ENCODE measurements at regions of chr3 and their contacts with region 1.

Region 1: GRCh38 chr3:67654099-67654843 is at the start of gene SUCLG2:
- DNase-seq: peak; percentile 71
- ATAC-seq: peak; percentile 94
- H3K4me3 ChIP-seq: peak within 1 kb of the TSS; percentile 64 to 94 (median 93)
- H3K27ac ChIP-seq: peak within 1 kb of the TSS; percentile 94
- H3K4me1 ChIP-seq: peaks cover 46% of the 10 kb centered on the region
- H3K27me3 ChIP-seq: no peaks in the 10 kb centered on the region
- CTCF ChIP-seq: no peak
- EP300 ChIP-seq: peak in 1 of 2 experiments; percentile 26; a peak in 1 of 4 replicates
- POLR2A ChIP-seq: peak; percentile 78 to 82
- RAD21 ChIP-seq: peak; percentile 66; the same call in 1 of the 2 replicates
- total RNA-seq, gene SUCLG2: 64.9 and 79.4 TPM in 2 replicates

Region 2: DNA sequence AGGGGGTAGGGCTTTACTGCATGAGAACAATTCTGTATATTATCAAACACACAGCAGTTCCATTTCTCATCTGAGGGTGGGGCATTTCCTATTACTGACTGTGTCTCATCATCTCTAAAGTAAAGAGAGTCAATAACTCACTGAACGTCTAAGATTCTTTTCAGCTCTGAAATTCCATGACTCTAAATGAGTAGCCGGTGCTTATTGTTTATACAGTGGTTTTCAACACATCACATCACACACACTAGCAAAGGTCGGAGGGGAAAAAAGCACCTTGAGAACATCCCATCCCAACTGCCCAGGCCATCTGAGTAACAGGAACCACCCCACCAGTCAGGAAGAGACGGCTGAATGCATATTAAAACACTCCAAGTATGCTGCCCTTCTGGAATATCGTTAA is 195.9 kb before region 1 on chr3:
- CTCF ChIA-PET with region 1: no interaction called
- POLR2A ChIA-PET with region 1: no interaction called
- in situ Hi-C with region 1: no loop called
- intact Hi-C with region 1: no loop called
- DNase-seq: no peak
- ATAC-seq: no peak
- H3K4me3 ChIP-seq: no peak overlapping the region
- H3K27ac ChIP-seq: no peak overlapping the region
- H3K4me1 ChIP-seq: no peaks in the 10 kb centered on the region
- H3K27me3 ChIP-seq: no peaks in the 10 kb centered on the region
- CTCF ChIP-seq: no peak
- EP300 ChIP-seq: no peak
- POLR2A ChIP-seq: no peak
- RAD21 ChIP-seq: no peak

Region 3: GRCh38 chr3:67540198-67540894 is 113.9 kb before region 1 on chr3:
- CTCF ChIA-PET with region 1: no interaction called
- POLR2A ChIA-PET with region 1: interaction called, 3 read pairs
- in situ Hi-C with region 1: no loop called
- intact Hi-C with region 1: loop called (anchors 1 kb)
- DNase-seq: peak; percentile 81
- ATAC-seq: peak; percentile 98
- H3K4me3 ChIP-seq: peak overlapping the region in 1 of 3 experiments; percentile 40; a peak in 2 of 6 replicates
- H3K27ac ChIP-seq: peak overlapping the region; percentile 60
- H3K4me1 ChIP-seq: peaks cover 28% of the 10 kb centered on the region
- H3K27me3 ChIP-seq: no peaks in the 10 kb centered on the region
- CTCF ChIP-seq: peak; percentile 68
- EP300 ChIP-seq: 0 out of 4 replicates have a peak, but pooled peaks of 1 of the 2 experiments have one; percentile 25
- POLR2A ChIP-seq: no peak
- RAD21 ChIP-seq: 0 out of 2 replicates have a peak, but pooled peaks have one; percentile 18

Region 4: DNA sequence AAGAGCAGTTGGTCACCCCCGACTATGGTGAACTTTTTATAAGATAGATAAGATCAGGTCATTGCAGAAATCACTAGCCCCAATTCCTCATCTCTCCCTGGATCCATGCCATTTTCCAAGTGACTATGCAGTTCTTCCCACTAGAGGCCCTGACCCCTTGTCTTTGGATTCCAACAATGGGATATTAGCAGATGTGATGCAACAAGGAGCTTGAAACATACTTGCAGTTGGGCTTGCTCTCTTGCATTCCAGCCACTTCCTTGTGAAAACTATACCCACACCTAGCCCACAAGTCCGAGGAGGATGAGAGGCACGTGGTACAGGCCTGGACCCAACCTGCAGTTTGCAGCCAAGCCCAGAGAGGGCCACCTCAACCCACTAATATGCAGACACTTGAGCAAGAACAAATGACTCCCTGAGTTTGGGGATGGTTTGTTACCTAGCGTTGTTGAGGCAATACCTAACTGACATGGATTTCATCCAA is 60.5 kb before region 1 on chr3:
- CTCF ChIA-PET with region 1: no interaction called
- POLR2A ChIA-PET with region 1: interaction called, 5 read pairs
- in situ Hi-C with region 1: no loop called
- intact Hi-C with region 1: loop called (anchors 5 kb)
- DNase-seq: peak; percentile 14
- ATAC-seq: peak; percentile 88
- H3K4me3 ChIP-seq: no peak overlapping the region
- H3K27ac ChIP-seq: no peak overlapping the region
- H3K4me1 ChIP-seq: peaks cover 29% of the 10 kb centered on the region
- H3K27me3 ChIP-seq: no peaks in the 10 kb centered on the region
- CTCF ChIP-seq: peak; percentile 38
- EP300 ChIP-seq: no peak
- POLR2A ChIP-seq: no peak
- RAD21 ChIP-seq: peak; percentile 41

Region 5: GRCh38 chr3:68017067-68017466 is 362.8 kb after region 1 on chr3:
- CTCF ChIA-PET with region 1: no interaction called
- POLR2A ChIA-PET with region 1: no interaction called
- in situ Hi-C with region 1: no loop called
- intact Hi-C with region 1: no loop called
- DNase-seq: peak; percentile 8
- ATAC-seq: no peak
- H3K4me3 ChIP-seq: no peak overlapping the region
- H3K27ac ChIP-seq: no peak overlapping the region
- H3K4me1 ChIP-seq: no peaks in the 10 kb centered on the region
- H3K27me3 ChIP-seq: no peaks in the 10 kb centered on the region
- CTCF ChIP-seq: 0 out of 2 replicates have a peak, but pooled peaks have one; percentile 11
- EP300 ChIP-seq: no peak
- POLR2A ChIP-seq: no peak
- RAD21 ChIP-seq: no peak

Measured in HepG2 (cell line).